ENCODE measurements at regions of chr9 and their contacts with region 1.

Region 1: GRCh38 chr9:114155263-114155972 is at the start of gene COL27A1:
- DNase-seq: peak; percentile 95
- total RNA-seq, gene COL27A1: 6.7 to 8.1 TPM

Region 2: GRCh38 chr9:114108016-114108833 is 47.2 kb before region 1 on chr9:
- intact Hi-C with region 1: loop called (anchors 5 kb)
- DNase-seq: peak; percentile 91

Region 3: GRCh38 chr9:114263853-114264510 is 108.6 kb after region 1 on chr9:
- intact Hi-C with region 1: loop called in 1 of 2 experiments (anchors 10 kb)
- DNase-seq: no peak

Region 4: GRCh38 chr9:114271641-114272081 is 116.2 kb after region 1 on chr9:
- intact Hi-C with region 1: loop called (anchors 5 to 10 kb)
- DNase-seq: peak; percentile 85

Region 5: GRCh38 chr9:114285166-114285867 is 129.9 kb after region 1 on chr9:
- intact Hi-C with region 1: loop called (anchors 5 kb)
- DNase-seq: peak; percentile 86

Region 6: GRCh38 chr9:115192835-115193525 is 1037.6 kb after region 1 on chr9:
- intact Hi-C with region 1: no loop called
- DNase-seq: no peak

Measured in posterior vena cava (tissue), 2 donors.